ACHN (cell line): ENCODE measurements at regions of chr7 and their contacts with region 1.

Region 1: GRCh38 chr7:129664029-129665012 is 52.8 kb downstream of the NRF1 start:
- DNase-seq: peak; percentile 92

Region 2: DNA sequence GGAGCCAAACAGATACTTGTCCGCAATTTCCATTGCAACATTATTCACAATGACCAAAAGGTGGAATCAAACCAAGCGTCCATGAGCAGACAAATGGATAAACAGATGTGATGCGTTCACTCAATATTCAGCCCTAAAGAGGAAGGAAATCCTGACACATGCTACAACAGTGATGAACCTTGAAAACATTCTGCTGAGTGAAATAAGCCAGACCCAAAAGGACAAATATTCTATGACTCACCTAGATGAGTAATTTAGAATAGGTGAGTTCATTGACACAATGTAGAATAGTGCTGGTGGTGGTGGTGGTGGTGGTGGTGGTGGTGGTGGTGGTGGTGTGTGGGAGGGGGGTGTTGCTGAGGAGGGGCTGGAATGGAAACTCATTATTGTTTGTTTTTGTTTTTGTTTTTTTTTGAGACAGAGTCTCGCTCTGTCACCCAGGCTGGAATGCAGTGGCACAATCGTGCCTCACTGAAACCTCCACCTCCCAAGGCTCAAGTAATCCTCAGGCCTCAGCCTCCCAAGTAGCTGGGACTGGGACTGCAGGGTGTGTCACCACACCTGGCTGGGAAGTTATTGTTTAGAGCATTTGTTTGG is 133.4 kb before region 1 on chr7:
- in situ Hi-C with region 1: no loop called
- DNase-seq: peak; percentile 58

Region 3: GRCh38 chr7:129824291-129825004 is 160.1 kb after region 1 on chr7:
- in situ Hi-C with region 1: loop called (anchors 25 kb)
- DNase-seq: no peak

Region 4: GRCh38 chr7:129835569-129835968 is 171.2 kb after region 1 on chr7:
- in situ Hi-C with region 1: no loop called
- DNase-seq: no peak